IMR-90 (cell line): ENCODE measurements at regions of chr1 and their contacts with region 1.

Region 1: GRCh38 chr1:151008190-151008860 is at the start of gene PRUNE1:
- DNase-seq: peak; percentile 94
- ATAC-seq: peak; percentile 90
- H3K4me3 ChIP-seq: peak within 1 kb of the TSS; percentile 79
- H3K27ac ChIP-seq: peak within 1 kb of the TSS; percentile 76
- H3K4me1 ChIP-seq: peaks cover 4% of the 10 kb centered on the region; the same call in 1 of the 2 replicates
- H3K27me3 ChIP-seq: no peaks in the 10 kb centered on the region
- CTCF ChIP-seq: no peak
- POLR2A ChIP-seq: peak; percentile 37
- RAD21 ChIP-seq: no peak
- total RNA-seq, gene PRUNE1: 7.9 and 8.6 TPM in 2 replicates

Region 2: DNA sequence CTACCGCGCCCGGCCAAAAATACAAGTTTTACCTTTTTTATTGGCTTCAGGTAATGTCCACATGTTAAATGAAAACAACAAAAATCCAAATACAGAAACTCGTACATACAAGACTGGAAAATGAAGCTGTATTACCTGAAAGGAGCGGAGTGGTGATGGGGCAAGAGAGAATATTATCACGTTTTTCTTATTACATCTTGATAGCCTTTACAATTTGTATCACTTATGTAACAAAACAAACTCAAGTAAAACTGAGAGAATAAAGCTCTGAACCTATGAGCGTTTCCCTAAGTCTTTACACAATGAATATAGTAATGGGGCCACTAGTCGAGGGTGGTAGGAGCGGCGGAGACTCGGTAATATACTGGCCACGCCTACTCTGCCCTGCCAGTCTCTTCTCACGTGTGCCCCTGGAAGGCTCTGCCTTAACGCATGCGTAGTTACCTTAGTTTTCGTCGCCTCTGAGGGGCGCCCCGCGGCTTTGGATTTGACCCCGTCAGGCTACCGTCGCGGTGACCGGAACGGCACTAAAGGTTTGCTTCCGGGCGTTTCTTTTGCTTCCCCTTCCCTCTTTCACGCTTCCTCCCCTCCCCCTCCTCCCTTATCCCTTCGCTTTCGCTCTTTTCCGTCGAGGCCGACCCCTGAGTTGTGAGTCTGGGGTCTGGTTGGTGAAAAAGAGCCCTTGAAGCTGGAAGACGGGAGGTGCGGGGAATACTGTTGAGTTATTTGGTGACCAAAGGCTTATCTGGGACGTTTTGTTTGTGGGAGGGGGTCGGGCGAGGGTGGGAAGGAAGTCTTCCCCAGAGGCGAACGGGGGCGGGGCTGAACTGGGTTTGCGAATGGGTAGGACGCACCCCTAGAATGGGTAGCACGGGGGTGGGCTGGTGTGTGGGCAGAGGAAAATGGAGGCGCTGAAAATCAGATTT is 82.2 kb before region 1 on chr1 and contains the start of gene SETDB1:
- CTCF ChIA-PET with region 1: no interaction called
- POLR2A ChIA-PET with region 1: no interaction called
- dilution Hi-C with region 1: no loop called
- in situ Hi-C with region 1: no loop called
- intact Hi-C with region 1: no loop called
- DNase-seq: peak; percentile 95
- ATAC-seq: peak; percentile 96
- H3K4me3 ChIP-seq: peak within 1 kb of the TSS; percentile 85
- H3K27ac ChIP-seq: peak within 1 kb of the TSS; percentile 96
- H3K4me1 ChIP-seq: peaks cover 2% of the 10 kb centered on the region; the same call in 1 of the 2 replicates
- H3K27me3 ChIP-seq: no peaks in the 10 kb centered on the region
- CTCF ChIP-seq: 0 out of 2 replicates have a peak, but pooled peaks have one; percentile 2
- POLR2A ChIP-seq: no peak; the same call in 1 of the 2 replicates
- RAD21 ChIP-seq: no peak
- total RNA-seq, gene SETDB1: 22.9 and 24.7 TPM in 2 replicates

Region 3: GRCh38 chr1:150979092-150980056 is 29.0 kb before region 1 on chr1:
- CTCF ChIA-PET with region 1: interaction called, 10 read pairs
- POLR2A ChIA-PET with region 1: no interaction called
- dilution Hi-C with region 1: no loop called
- in situ Hi-C with region 1: no loop called
- intact Hi-C with region 1: no loop called
- DNase-seq: peak; percentile 85
- ATAC-seq: peak; percentile 32
- H3K4me3 ChIP-seq: no peak overlapping the region
- H3K27ac ChIP-seq: no peak overlapping the region
- H3K4me1 ChIP-seq: peaks cover 22% of the 10 kb centered on the region
- H3K27me3 ChIP-seq: no peaks in the 10 kb centered on the region; the same call in 1 of the 2 replicates
- CTCF ChIP-seq: peak; percentile 100; the same call in 1 of the 2 replicates
- POLR2A ChIP-seq: no peak
- RAD21 ChIP-seq: peak; percentile 73

Region 4: GRCh38 chr1:150995896-150996295 is 12.4 kb before region 1 on chr1:
- CTCF ChIA-PET with region 1: interaction called, 24 read pairs
- POLR2A ChIA-PET with region 1: no interaction called
- dilution Hi-C with region 1: no loop called
- in situ Hi-C with region 1: no loop called
- intact Hi-C with region 1: no loop called
- DNase-seq: no peak
- ATAC-seq: peak; percentile 80
- H3K4me3 ChIP-seq: no peak overlapping the region
- H3K27ac ChIP-seq: no peak overlapping the region
- H3K4me1 ChIP-seq: peaks cover 1% of the 10 kb centered on the region; the same call in 1 of the 2 replicates
- H3K27me3 ChIP-seq: no peaks in the 10 kb centered on the region
- CTCF ChIP-seq: peak; percentile 60
- POLR2A ChIP-seq: no peak
- RAD21 ChIP-seq: peak; percentile 44

Region 5: DNA sequence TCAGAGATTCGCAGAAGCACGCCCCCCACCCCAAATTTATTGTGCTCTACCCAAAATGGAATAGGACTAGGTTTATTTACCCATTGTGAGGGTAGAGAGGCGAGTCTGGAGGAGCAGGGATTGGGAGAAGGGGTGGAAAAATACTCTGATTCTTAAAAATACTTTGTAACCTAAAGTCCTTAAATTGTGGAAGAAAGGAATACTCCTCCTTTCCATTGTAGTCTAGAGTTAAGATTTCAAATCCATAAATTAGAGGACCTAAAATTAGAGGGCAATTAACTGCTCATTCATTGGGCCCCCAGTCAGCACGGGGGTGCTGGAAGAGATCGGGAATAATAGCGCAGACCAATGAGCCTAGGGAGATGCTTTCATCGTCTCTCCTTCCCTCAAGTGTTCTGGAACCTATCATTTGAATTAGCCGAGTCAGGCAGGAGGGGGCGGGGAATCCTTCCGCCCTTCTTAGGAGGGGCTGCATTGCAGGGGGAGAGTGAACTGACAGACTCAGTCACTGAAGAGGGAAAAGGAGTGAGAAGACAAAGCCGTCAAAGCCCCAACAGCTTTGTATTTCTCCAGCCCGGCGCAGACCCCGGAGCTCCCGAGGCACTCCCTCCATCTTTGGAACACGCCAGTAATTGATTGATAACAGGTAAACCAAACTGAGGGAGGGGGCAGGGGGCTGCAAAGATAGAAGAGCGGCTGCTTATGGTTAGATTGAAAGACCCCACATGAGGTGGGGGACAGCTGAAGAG is 51.8 kb after region 1 on chr1 and contains the start of gene MLLT11:
- CTCF ChIA-PET with region 1: interaction called, 5 read pairs
- POLR2A ChIA-PET with region 1: no interaction called
- dilution Hi-C with region 1: no loop called
- in situ Hi-C with region 1: no loop called
- intact Hi-C with region 1: loop called (anchors 5 kb)
- DNase-seq: peak; percentile 69
- ATAC-seq: peak; percentile 41
- H3K4me3 ChIP-seq: peak within 1 kb of the TSS; percentile 89
- H3K27ac ChIP-seq: peak within 1 kb of the TSS; percentile 99
- H3K4me1 ChIP-seq: peaks cover 15% of the 10 kb centered on the region
- H3K27me3 ChIP-seq: no peaks in the 10 kb centered on the region
- CTCF ChIP-seq: no peak
- POLR2A ChIP-seq: peak; percentile 51
- RAD21 ChIP-seq: no peak
- total RNA-seq, gene MLLT11: 3.6 and 5.3 TPM in 2 replicates